ENCODE measurements at regions of chr1 and their contacts with region 1.

Region 1: GRCh38 chr1:114581335-114582287 is at the start of gene BCAS2:
- DNase-seq: peak; percentile 96
- ATAC-seq: peak; percentile 98
- H3K4me3 ChIP-seq: peak within 1 kb of the TSS; percentile 70 to 83 (median 78)
- H3K27ac ChIP-seq: peak within 1 kb of the TSS; percentile 80
- H3K4me1 ChIP-seq: peaks cover 20% of the 10 kb centered on the region
- H3K27me3 ChIP-seq: no peaks in the 10 kb centered on the region; a peak in 2 of 5 replicates
- CTCF ChIP-seq: no peak
- EP300 ChIP-seq: no peak
- POLR2A ChIP-seq: peak; percentile 87 to 92
- RAD21 ChIP-seq: no peak
- total RNA-seq, gene BCAS2: 47.4 and 78.0 TPM in 2 replicates

Region 2: DNA sequence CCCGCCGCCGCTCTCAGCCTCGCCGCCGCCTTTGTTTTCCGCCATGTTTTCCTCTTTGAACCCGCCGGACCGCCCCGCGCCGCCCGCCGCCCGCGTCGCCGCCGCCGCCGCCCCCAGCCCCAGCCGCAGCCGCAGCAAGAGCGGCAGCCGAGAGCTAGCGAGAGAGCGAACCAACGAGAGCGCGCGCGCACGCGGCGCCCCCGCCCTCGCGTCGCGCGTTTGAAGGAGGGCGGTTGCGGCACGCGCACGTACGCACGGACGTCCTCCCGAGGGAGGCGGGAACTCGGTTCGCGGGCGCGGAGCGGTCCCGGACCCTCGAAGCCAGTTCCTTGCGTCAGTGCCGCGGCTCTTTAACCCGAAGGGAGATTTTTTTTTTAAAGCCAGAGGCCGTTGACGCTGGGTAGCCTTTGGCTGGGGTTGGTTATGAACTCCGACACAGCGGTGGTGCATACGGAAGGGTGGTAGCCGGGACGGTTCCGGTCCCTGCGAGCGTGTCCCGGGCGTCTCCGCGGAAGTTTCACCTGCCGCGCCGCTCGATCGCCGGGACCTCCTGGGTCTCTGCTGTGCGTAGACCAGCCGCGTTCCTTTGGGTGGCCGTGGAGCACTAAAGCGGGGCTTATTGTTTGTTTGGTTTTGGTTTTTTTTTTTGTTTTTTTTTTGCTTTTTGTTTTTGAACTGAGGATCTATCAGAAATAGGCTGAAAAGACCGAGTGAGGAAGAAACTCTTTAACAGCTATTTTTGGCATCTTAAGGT is 70.4 kb before region 1 on chr1 and contains the start of gene TRIM33:
- CTCF ChIA-PET with region 1: no interaction called
- POLR2A ChIA-PET with region 1: interaction called, 3 read pairs
- in situ Hi-C with region 1: no loop called
- intact Hi-C with region 1: loop called (anchors 1 kb)
- DNase-seq: peak; percentile 80
- ATAC-seq: peak; percentile 78
- H3K4me3 ChIP-seq: peak within 1 kb of the TSS; percentile 84 to 95 (median 93)
- H3K27ac ChIP-seq: peak within 1 kb of the TSS; percentile 90
- H3K4me1 ChIP-seq: peaks cover 45% of the 10 kb centered on the region
- H3K27me3 ChIP-seq: no peaks in the 10 kb centered on the region
- CTCF ChIP-seq: 0 out of 2 replicates have a peak, but pooled peaks have one; percentile 5
- EP300 ChIP-seq: no peak
- POLR2A ChIP-seq: peak; percentile 78 to 87
- RAD21 ChIP-seq: peak; percentile 34; the same call in 1 of the 2 replicates
- total RNA-seq, gene TRIM33: 42.2 and 42.8 TPM in 2 replicates

Region 3: DNA sequence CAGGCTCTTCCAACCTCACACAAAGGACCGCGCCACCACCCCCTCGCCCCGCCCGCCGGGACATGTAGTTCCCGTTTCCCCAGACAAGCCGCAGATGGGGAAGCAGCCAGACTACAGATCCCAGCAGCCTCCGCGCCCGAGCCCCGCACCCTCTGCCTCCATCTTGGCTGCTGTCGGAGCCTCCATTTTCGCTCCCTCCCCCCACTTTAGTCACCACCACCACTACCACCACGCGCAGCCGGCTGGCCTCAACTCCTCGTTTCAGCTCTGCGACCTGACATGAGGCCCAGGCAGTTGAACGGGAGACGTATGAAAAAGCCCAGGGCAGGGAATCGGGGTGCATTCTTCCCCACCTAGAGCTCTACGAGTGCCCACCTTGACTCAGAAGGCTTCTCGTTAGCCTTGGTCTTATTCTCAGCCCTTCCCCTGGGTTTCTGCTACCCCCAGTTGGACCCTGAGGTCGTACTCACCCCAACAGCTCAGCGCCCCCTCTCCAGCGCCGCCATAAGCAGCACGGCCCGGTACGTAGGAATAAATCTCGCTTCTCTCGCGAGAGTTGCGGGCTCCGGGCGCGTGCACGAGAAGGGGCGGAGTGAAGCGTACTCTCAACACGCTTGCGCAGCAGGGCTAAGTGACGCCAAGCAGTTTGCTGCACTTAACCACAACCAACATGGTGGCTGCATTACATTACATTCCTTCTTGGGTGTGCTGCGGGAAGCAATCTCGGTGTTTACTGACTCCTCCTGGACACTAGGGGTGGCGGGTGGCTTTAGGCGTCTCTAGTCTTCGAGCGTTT is 176.0 kb after region 1 on chr1 and contains the start of gene CSDE1:
- CTCF ChIA-PET with region 1: no interaction called
- POLR2A ChIA-PET with region 1: no interaction called
- in situ Hi-C with region 1: no loop called
- intact Hi-C with region 1: loop called (anchors 2 kb)
- DNase-seq: peak; percentile 98
- ATAC-seq: peak; percentile 95
- H3K4me3 ChIP-seq: peak within 1 kb of the TSS; percentile 85 to 100 (median 99)
- H3K27ac ChIP-seq: peak within 1 kb of the TSS; percentile 98
- H3K4me1 ChIP-seq: peaks cover 44% of the 10 kb centered on the region
- H3K27me3 ChIP-seq: no peaks in the 10 kb centered on the region; a peak in 1 of 5 replicates
- CTCF ChIP-seq: peak; percentile 66
- EP300 ChIP-seq: peak in 1 of 2 experiments; percentile 17; a peak in 1 of 4 replicates
- POLR2A ChIP-seq: peak; percentile 85 to 97
- RAD21 ChIP-seq: peak; percentile 6; the same call in 1 of the 2 replicates
- total RNA-seq, gene CSDE1: 313 and 582 TPM in 2 replicates

Measured in HepG2 (cell line).